Activated CD4-positive, alpha-beta memory T cell treated with anti-CD3 and anti-CD28 coated beads for 36 hours (primary cell): ENCODE measurements at regions of chr10 and their contacts with region 1.

Region 1: GRCh38 chr10:122435212-122435827 is 19.1 kb upstream of the ARMS2 start:
- DNase-seq: no peak
- H3K4me3 Mint-ChIP-seq: no peak overlapping the region
- H3K27ac Mint-ChIP-seq: no peak overlapping the region
- H3K4me1 Mint-ChIP-seq: peaks cover 2% of the 10 kb centered on the region
- H3K27me3 Mint-ChIP-seq: no peaks in the 10 kb centered on the region

Region 2: GRCh38 chr10:122142641-122143237 is 292.6 kb before region 1 on chr10:
- CTCF ChIA-PET with region 1: no interaction called
- POLR2A ChIA-PET with region 1: no interaction called
- intact Hi-C with region 1: loop called (anchors 10 kb)
- DNase-seq: peak; percentile 35
- H3K4me3 Mint-ChIP-seq: no peak overlapping the region
- H3K27ac Mint-ChIP-seq: no peak overlapping the region
- H3K4me1 Mint-ChIP-seq: no peaks in the 10 kb centered on the region
- H3K27me3 Mint-ChIP-seq: peaks cover 2% of the 10 kb centered on the region

Region 3: GRCh38 chr10:122267849-122268737 is 167.2 kb before region 1 on chr10:
- CTCF ChIA-PET with region 1: interaction called, 28 read pairs
- POLR2A ChIA-PET with region 1: no interaction called
- intact Hi-C with region 1: no loop called
- DNase-seq: peak; percentile 71
- H3K4me3 Mint-ChIP-seq: no peak overlapping the region
- H3K27ac Mint-ChIP-seq: no peak overlapping the region
- H3K4me1 Mint-ChIP-seq: no peaks in the 10 kb centered on the region
- H3K27me3 Mint-ChIP-seq: peaks cover 18% of the 10 kb centered on the region

Region 4: GRCh38 chr10:122279725-122280141 is 155.6 kb before region 1 on chr10:
- CTCF ChIA-PET with region 1: interaction called, 18 read pairs
- POLR2A ChIA-PET with region 1: no interaction called
- intact Hi-C with region 1: no loop called
- DNase-seq: peak; percentile 53
- H3K4me3 Mint-ChIP-seq: no peak overlapping the region
- H3K27ac Mint-ChIP-seq: no peak overlapping the region
- H3K4me1 Mint-ChIP-seq: peaks cover 4% of the 10 kb centered on the region
- H3K27me3 Mint-ChIP-seq: peaks cover 18% of the 10 kb centered on the region

Region 5: GRCh38 chr10:122298598-122299301 is 136.6 kb before region 1 on chr10:
- CTCF ChIA-PET with region 1: interaction called, 178 read pairs
- POLR2A ChIA-PET with region 1: no interaction called
- intact Hi-C with region 1: loop called (anchors 1 kb)
- DNase-seq: peak; percentile 79
- H3K4me3 Mint-ChIP-seq: no peak overlapping the region
- H3K27ac Mint-ChIP-seq: no peak overlapping the region
- H3K4me1 Mint-ChIP-seq: peaks cover 7% of the 10 kb centered on the region
- H3K27me3 Mint-ChIP-seq: no peaks in the 10 kb centered on the region

Region 6: DNA sequence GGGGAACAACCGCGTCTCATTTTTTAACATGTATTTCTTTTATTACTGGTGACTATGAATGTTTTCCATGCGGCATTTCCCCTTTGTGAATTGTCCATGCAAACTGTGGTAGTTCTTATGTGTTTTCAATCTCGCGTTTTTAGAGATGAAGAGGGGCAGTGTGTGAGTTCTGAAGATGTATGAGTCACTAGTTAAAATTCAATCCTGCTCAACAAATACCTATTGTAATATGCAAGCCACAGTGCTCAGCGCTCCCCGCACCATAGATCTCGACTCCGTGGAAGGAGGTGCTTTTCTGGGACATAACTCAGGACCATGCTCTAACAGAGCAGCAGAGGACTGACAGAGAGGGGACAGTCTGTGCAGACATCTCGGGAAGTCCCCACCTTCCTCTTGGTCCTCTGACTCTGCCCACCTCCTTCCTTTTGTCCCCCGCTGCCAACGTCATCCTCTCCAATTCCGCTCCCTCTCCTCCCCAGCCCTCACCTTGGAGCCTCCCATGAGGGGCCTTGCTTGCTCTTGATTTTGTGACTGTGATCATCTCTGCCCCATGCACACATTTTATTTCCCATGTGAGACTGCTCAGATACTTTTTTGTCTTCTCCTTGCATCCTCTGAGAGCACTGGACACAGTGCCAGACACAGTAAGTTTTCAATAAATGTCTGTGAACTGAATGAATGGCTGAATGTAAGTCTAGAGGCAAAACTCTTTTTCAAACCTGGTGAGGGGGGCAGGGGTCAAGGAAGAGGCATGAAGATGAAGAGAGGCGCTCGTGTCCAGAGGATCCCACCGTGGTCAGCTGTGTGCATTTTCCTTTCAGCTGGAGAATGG is 103.5 kb before region 1 on chr10:
- CTCF ChIA-PET with region 1: interaction called, 16 read pairs
- POLR2A ChIA-PET with region 1: no interaction called
- intact Hi-C with region 1: no loop called
- DNase-seq: no peak
- H3K4me3 Mint-ChIP-seq: no peak overlapping the region
- H3K27ac Mint-ChIP-seq: no peak overlapping the region
- H3K4me1 Mint-ChIP-seq: peaks cover 6% of the 10 kb centered on the region
- H3K27me3 Mint-ChIP-seq: peaks cover 31% of the 10 kb centered on the region

Region 7: GRCh38 chr10:122342293-122343134 is 92.8 kb before region 1 on chr10:
- CTCF ChIA-PET with region 1: interaction called, 148 read pairs
- POLR2A ChIA-PET with region 1: no interaction called
- intact Hi-C with region 1: loop called (anchors 1 kb)
- DNase-seq: peak; percentile 68
- H3K4me3 Mint-ChIP-seq: no peak overlapping the region
- H3K27ac Mint-ChIP-seq: no peak overlapping the region
- H3K4me1 Mint-ChIP-seq: peaks cover 8% of the 10 kb centered on the region
- H3K27me3 Mint-ChIP-seq: peaks cover 3% of the 10 kb centered on the region